ENCODE measurements at regions of chr22 and their contacts with region 1.

Region 1: GRCh38 chr22:21082248-21082647 is 36.5 kb downstream of the LRRC74B start:
- ATAC-seq: no peak
- H3K4me3 ChIP-seq: no peak overlapping the region
- H3K27ac ChIP-seq: no peak overlapping the region
- H3K4me1 ChIP-seq: no peaks in the 10 kb centered on the region

Region 2: DNA sequence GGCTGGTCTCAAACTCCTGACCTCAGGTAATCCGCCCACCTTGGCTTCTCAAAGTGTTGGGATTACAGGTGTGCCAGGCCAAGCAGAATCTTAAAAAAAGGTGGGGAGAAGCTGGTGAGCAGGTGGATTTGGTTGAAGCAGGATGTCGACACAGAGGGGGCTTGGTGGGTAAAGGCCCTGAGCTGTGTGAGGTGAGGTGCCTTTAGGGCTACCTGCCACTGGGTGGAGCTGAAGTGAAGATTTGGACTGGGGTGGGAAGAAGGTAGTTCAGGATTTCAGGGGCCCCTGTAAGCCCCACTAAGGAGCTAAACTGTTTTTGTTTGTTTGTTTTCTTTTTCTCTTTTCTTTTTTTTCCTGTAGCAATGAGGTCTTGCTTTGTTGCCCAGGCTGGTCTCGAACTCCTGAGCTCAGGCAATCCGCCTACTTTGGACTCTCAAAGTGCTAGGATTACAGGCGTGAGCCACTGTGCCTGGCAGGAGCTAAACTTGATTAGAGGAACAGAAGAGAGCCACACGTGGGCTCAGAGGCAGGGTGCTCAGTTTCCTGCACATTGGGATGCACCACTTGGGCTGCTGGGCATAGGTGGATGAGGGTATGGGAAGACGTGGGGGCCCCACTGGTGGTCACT is 61.3 kb before region 1 on chr22:
- in situ Hi-C with region 1: loop called in 1 of 9 experiments (anchors 10 kb)
- ATAC-seq: peak in 5 of 8 experiments; percentile 23 to 70 (median 38)
- H3K4me3 ChIP-seq: no peak overlapping the region
- H3K27ac ChIP-seq: peak overlapping the region in 1 of 2 donors; percentile 59
- H3K4me1 ChIP-seq: peaks cover 10 to 15% of the 10 kb centered on the region in 2 donors

Measured in motor neuron (in vitro differentiated cells).